Activated T-helper 2 cell treated with anti-CD3 and anti-CD28 coated beads, Interferon-gamma antibody, Interleukin-2, Interleukin-4, amounts not matched to agents 10 μg/mL and 5 μg/mL and 100 μg/mL, durations not matched to agents 14 hours and 24 hours and 36 hours (primary cell): ENCODE measurements at regions of chr15 and their contacts with region 1.

Region 1: DNA sequence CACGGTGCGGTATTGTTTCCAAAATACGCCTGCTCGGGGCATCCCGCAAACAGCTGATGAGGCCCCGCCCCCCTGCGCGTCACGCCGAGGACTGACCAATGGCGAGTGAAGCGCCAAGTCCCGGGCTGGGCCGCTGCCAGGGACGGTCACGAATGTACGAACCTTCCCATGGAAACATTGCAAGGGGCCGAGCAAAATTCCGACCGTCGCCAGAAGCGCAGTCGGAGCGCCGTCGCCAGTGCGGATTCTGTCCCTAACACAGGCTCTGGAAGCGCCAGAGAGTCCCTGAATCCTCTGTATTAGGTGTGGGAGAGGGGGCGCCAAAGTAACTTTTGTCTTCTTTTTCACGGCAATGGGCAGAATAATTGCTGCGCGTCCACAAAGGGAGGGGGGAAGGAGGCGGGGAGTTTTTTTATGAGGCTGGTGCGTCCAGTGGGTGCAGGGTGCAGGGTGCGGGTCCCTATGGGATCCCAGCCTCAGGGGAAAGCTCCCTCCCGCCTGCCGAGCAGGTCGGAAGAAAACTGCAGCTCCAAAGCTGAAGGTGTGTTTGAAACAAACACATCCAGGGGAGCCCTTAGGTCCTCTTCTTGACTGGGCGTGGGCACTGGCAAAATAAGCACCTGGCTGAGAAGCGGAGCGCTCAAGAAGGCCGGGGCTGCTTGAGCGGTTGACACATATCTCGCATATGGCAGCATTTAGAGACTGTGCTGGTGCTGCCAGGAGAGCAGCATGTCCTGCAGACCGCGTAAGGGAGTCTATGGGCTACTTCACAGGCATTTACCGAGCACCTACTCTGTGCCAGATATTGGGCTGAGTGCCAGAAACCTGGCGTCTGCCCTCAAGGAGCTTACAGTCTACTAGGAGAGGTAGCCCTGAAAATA is at the start of gene BMF:
- DNase-seq: peak; percentile 95
- H3K4me3 Mint-ChIP-seq: peak within 1 kb of the TSS; percentile 85
- H3K27ac Mint-ChIP-seq: peak within 1 kb of the TSS; percentile 82
- H3K4me1 Mint-ChIP-seq: peaks cover 54% of the 10 kb centered on the region
- H3K27me3 Mint-ChIP-seq: peaks cover 5% of the 10 kb centered on the region
- total RNA-seq, gene BMF: 16.1 and 17.9 TPM in 2 replicates

Region 2: DNA sequence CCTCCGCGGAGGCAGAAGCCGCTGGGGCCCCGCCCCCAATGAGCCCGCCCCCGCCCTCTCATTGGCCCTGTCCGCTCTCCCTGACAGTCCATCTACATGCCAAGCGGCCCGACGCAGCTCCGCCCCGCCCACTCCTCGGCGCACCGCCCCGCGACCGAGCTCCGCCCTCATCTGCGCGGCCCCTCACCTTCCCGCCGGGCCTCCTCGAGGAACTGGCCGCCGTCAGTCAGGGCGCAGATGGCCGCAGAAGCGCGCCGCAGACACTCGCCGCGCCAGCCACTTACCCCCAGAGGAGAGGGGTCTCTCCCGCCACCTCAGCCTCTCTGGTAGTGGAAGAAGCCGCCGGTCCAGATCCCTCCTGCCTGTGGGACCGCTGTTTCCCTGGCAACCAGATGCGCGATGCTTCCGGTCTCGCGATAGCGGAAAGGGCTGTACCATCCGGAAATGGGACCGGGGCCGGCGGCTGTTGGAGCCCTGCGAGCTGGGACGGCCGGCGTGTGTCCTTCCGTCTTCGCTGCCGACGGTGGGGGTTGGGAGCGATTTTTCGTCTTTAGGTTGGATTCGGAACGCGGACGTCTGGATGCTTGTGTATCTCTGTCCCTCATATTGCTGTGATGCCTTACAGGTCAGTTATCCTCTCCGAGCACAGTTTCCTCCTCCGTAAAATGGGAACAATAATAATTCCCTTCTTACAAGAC is 326.5 kb before region 1 on chr15 and contains the start of gene FSIP1:
- intact Hi-C with region 1: loop called (anchors 5 kb)
- DNase-seq: peak; percentile 95
- H3K4me3 Mint-ChIP-seq: peak within 1 kb of the TSS; percentile 81
- H3K27ac Mint-ChIP-seq: peak within 1 kb of the TSS; percentile 67
- H3K4me1 Mint-ChIP-seq: peaks cover 34% of the 10 kb centered on the region
- H3K27me3 Mint-ChIP-seq: peaks cover 6% of the 10 kb centered on the region
- total RNA-seq, gene FSIP1: 0.14 and 0.16 TPM in 2 replicates

Region 3: GRCh38 chr15:40044717-40045571 is 64.2 kb before region 1 on chr15:
- intact Hi-C with region 1: loop called (anchors 1 kb)
- DNase-seq: peak; percentile 77
- H3K4me3 Mint-ChIP-seq: peak overlapping the region; percentile 11
- H3K27ac Mint-ChIP-seq: peak overlapping the region; percentile 82
- H3K4me1 Mint-ChIP-seq: peaks cover 70% of the 10 kb centered on the region
- H3K27me3 Mint-ChIP-seq: no peaks in the 10 kb centered on the region

Region 4: DNA sequence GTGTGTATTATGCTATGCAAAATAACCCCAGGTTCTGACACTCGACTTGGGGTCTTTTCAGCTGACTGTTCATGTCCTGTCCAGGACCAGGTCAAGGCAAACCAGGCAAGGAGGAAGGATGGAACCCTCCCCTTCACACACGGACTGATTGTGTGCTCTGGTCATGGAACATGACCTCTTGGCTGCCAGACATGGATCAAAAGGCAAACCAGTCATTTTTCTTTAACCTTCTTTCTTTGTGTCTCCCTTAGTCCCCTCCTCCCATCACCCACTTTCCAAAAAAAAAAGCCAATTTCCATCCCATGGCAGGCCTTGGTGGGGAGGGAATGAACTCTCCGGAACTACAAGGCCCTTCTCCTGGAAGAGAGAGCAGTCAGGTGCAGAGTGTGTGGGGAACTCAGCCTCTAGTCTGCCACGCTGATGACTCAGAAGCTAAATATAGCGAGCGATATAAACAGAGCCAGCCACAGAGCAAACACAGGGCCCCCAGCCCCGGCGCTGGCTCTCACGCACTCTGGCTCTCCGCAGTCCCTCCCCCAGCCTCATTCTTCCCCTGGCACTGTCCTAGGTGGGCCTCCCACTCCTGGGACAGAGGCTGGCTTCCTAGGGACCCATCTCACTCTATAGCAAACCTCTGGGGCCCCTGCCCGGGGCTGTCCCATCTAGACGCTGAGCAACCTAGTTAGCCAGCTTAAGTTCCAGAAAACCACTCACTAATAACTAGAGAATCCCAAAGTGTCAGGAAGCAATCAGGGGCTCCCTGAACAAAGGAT is 10.4 kb before region 1 on chr15:
- intact Hi-C with region 1: loop called (anchors 1 kb)
- DNase-seq: peak; percentile 73
- H3K4me3 Mint-ChIP-seq: peak overlapping the region; percentile 67
- H3K27ac Mint-ChIP-seq: peak overlapping the region; percentile 97
- H3K4me1 Mint-ChIP-seq: peaks cover 76% of the 10 kb centered on the region
- H3K27me3 Mint-ChIP-seq: no peaks in the 10 kb centered on the region

Region 5: DNA sequence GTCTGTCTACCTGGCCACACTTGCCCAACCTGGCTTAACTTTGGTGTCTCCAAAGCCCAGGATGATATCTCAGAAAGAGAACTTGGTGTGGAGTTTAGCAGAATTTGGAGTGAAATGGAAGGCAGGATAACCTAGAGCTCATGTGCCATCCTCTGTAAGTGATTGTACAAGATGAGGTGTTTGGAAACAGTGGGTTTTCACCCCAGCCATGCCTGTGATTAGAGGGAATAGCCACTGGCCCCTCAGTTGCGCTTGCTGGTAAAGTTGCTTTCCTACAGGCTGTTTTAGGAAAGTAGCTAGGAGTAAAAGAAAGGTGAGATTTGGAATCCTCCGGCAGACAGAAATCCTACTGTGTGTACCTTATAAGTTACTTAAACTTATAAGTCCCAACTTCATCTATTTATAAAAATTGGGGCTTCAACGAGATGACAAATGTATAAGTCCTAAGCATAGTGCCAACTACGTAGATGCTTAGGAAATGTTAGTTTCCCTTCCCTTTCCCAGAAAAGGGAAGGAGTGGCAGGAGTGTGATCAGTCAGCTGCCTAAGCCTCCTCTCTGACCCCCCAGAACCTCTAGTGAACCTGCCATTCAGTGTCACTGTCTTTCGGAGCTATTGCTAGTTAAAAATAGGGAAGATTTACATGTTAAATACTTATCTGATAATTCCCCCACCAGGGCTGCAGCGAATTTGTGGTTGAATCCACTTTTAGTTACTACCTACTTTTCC is 13.0 kb after region 1 on chr15:
- intact Hi-C with region 1: no loop called
- DNase-seq: no peak
- H3K4me3 Mint-ChIP-seq: no peak overlapping the region
- H3K27ac Mint-ChIP-seq: no peak overlapping the region
- H3K4me1 Mint-ChIP-seq: peaks cover under 1% of the 10 kb centered on the region
- H3K27me3 Mint-ChIP-seq: peaks cover 6% of the 10 kb centered on the region

Region 6: GRCh38 chr15:40160689-40161688 is 51.9 kb after region 1 on chr15 and contains the start of gene BUB1B:
- intact Hi-C with region 1: loop called (anchors 2 kb)
- DNase-seq: peak; percentile 94
- H3K4me3 Mint-ChIP-seq: no peak within 1 kb of the TSS
- H3K27ac Mint-ChIP-seq: no peak within 1 kb of the TSS
- H3K4me1 Mint-ChIP-seq: peaks cover 10% of the 10 kb centered on the region
- H3K27me3 Mint-ChIP-seq: no peaks in the 10 kb centered on the region
- total RNA-seq, gene BUB1B: 70.7 and 73.1 TPM in 2 replicates